ENCODE measurements at regions of chr11 and their contacts with region 1.

Region 1: DNA sequence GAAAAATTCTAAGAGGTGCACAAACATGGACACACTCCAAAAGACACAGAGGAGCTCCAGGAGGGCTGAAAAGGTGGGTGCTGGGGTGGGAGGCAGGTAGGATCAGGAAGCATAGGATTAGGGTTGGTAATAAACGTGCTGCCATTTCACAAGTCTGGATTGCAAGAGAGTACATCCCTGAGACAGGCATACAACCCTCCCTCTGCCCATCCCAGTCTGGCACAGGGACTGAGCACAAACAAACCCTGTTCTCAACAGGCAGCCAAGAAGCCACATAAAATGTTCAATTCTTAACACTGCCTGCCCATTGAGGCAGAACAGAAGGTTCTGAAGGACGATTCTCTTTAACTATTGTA is 18.5 kb downstream of the SLC35F2 start:
- DNase-seq: no peak
- H3K4me3 Mint-ChIP-seq: peak overlapping the region; percentile 64
- H3K27ac Mint-ChIP-seq: peak overlapping the region; percentile 88
- H3K4me1 Mint-ChIP-seq: peaks cover 46% of the 10 kb centered on the region
- H3K27me3 Mint-ChIP-seq: no peaks in the 10 kb centered on the region

Region 2: GRCh38 chr11:107590460-107591377 is 249.4 kb before region 1 on chr11 and contains the start of gene ELMOD1:
- intact Hi-C with region 1: loop called (anchors 2 kb)
- DNase-seq: peak; percentile 2
- H3K4me3 Mint-ChIP-seq: peak within 1 kb of the TSS; percentile 85
- H3K27ac Mint-ChIP-seq: peak within 1 kb of the TSS; percentile 56
- H3K4me1 Mint-ChIP-seq: peaks cover 26% of the 10 kb centered on the region
- H3K27me3 Mint-ChIP-seq: peaks cover 84% of the 10 kb centered on the region
- total RNA-seq, gene ELMOD1: not detected in 2 replicates

Region 3: DNA sequence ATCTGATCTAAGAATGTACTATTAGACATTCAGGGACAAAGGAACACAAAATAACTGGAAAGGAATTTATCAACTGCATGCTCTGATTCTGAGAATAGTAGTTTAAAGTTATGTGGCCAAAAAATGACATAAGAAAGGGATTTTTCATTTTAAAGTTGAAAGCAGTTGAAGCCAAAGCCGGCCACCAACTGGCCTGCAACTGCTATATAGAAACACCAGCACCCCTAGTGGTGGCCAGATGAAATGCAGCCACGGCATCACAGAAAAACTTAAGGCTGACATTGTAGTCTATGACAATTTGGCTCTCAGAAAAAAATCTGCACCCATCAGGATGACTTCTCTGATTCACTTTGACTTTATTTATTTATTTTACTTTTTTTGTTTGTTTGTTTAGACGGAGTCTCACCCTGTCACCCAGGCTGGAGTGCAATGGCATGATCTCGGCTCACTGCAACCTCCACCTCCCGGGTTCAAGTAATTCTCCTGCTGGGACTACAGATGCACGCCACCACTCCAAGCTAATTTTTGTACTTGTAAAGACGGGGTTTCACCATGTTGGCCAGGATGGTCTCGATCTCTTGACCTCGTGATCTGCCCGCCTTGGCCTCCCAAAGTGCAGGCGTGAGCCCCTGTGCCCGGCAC is 40.8 kb before region 1 on chr11:
- intact Hi-C with region 1: loop called (anchors 1 kb)
- DNase-seq: peak; percentile 44
- H3K4me3 Mint-ChIP-seq: no peak overlapping the region
- H3K27ac Mint-ChIP-seq: no peak overlapping the region
- H3K4me1 Mint-ChIP-seq: no peaks in the 10 kb centered on the region
- H3K27me3 Mint-ChIP-seq: no peaks in the 10 kb centered on the region

Region 4: DNA sequence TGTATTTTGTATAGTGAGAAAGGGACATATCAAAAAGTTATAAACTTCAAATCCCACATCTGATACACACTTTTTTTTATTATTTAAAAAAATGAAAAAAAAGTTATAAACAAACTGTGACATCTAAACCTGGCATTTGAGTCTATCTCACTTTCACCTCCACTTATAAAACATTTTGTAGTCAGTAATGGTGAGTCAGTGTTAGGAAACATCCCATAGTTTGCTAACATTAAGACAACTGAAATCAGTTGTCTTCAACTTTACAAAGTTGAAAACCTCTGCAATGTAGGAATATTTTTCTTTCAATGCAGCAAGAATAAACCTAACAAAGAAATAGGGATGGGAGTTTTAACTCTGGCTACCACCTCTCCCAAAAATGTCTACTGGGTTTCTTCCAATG is 29.2 kb before region 1 on chr11:
- intact Hi-C with region 1: no loop called
- DNase-seq: no peak
- H3K4me3 Mint-ChIP-seq: no peak overlapping the region
- H3K27ac Mint-ChIP-seq: no peak overlapping the region
- H3K4me1 Mint-ChIP-seq: no peaks in the 10 kb centered on the region
- H3K27me3 Mint-ChIP-seq: no peaks in the 10 kb centered on the region

Region 5: DNA sequence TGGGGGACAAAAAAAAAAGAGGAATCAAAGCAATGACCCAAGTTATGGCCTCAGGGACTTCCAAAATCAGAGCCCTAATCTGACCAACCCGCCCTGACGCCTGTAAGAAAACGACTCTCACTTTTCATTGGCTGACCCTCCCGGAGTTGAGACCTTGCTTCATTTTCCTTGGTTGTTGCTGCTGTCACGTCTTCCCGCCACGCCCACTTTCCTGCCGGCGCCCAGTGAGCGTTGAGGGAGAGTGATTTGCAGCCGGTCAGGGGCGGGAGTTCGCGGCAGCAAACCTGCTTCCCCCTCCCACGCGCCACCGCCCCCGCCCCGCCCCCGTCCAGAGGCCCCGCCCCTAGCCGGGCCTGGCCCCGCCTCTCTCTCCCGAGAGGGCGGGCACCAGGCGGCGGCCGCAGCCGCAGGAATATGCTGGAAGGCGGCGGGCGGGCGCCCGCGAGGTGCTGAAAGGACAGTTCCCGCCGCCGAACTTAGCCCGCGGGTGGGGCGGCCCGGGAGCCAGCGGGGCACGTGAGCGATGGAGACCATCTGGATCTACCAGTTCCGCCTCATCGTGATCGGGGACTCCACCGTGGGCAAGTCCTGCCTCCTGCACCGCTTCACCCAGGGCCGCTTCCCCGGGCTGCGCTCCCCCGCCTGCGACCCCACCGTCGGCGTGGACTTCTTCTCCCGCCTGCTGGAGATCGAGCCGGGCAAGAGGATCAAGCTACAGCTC is 88.1 kb after region 1 on chr11 and contains the start of gene RAB39A:
- intact Hi-C with region 1: loop called (anchors 5 kb)
- DNase-seq: peak; percentile 71
- H3K4me3 Mint-ChIP-seq: peak within 1 kb of the TSS; percentile 71
- H3K27ac Mint-ChIP-seq: no peak within 1 kb of the TSS
- H3K4me1 Mint-ChIP-seq: peaks cover 6% of the 10 kb centered on the region
- H3K27me3 Mint-ChIP-seq: peaks cover 25% of the 10 kb centered on the region
- total RNA-seq, gene RAB39A: not detected in 2 replicates

Region 6: GRCh38 chr11:108237058-108237481 is 397.0 kb after region 1 on chr11:
- intact Hi-C with region 1: loop called (anchors 2 kb)
- DNase-seq: no peak
- H3K4me3 Mint-ChIP-seq: peak overlapping the region; percentile 68
- H3K27ac Mint-ChIP-seq: peak overlapping the region; percentile 78
- H3K4me1 Mint-ChIP-seq: peaks cover 60% of the 10 kb centered on the region
- H3K27me3 Mint-ChIP-seq: peaks cover 4% of the 10 kb centered on the region

Region 7: DNA sequence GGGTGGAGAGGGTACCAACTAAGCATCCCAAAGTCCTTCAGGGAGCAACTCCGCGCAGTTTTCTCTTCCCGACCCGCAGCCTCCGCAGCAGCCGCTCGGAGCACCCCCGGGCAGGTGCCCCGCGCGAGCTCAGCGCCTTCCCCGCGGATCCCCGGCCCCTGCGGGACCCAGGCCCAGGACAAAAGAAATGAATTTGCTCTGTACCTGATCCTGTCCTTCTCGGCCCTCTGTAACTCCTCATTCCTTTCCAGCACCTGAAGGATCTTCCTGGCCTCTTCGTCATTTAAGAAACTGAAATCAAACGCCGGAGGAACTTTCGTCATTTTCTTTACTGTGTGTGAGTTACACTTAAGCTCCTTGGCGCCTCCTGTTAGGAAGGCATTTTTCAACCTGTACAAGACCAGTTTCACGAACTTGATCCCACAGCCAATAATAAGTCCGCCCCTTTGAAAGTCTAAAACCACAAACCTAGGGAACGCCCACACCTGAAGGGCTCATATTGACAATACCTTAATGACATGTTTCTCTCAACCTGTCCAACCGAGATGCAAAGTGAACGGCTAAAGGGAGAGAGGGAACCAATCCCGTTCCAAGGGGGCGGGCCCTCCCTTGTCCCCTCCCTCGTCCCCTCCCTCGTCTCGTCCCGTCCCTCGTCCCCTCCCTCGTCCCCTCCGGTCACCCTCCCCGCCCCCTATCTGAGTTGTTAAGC is 753.3 kb after region 1 on chr11 and contains the start of gene EXPH5:
- intact Hi-C with region 1: loop called (anchors 1 kb)
- DNase-seq: peak; percentile 76
- H3K4me3 Mint-ChIP-seq: peak within 1 kb of the TSS; percentile 89
- H3K27ac Mint-ChIP-seq: peak within 1 kb of the TSS; percentile 75
- H3K4me1 Mint-ChIP-seq: peaks cover 23% of the 10 kb centered on the region
- H3K27me3 Mint-ChIP-seq: peaks cover 29% of the 10 kb centered on the region
- total RNA-seq, gene EXPH5: 0.56 and 0.65 TPM in 2 replicates